Activated CD4-positive, alpha-beta T cell treated with anti-CD3 and anti-CD28 coated beads, Interleukin-2, amount 10 ng/mL, durations not matched to agents 24 days and 14 days (primary cell): ENCODE measurements at regions of chr11 and their contacts with region 1.

Region 1: DNA sequence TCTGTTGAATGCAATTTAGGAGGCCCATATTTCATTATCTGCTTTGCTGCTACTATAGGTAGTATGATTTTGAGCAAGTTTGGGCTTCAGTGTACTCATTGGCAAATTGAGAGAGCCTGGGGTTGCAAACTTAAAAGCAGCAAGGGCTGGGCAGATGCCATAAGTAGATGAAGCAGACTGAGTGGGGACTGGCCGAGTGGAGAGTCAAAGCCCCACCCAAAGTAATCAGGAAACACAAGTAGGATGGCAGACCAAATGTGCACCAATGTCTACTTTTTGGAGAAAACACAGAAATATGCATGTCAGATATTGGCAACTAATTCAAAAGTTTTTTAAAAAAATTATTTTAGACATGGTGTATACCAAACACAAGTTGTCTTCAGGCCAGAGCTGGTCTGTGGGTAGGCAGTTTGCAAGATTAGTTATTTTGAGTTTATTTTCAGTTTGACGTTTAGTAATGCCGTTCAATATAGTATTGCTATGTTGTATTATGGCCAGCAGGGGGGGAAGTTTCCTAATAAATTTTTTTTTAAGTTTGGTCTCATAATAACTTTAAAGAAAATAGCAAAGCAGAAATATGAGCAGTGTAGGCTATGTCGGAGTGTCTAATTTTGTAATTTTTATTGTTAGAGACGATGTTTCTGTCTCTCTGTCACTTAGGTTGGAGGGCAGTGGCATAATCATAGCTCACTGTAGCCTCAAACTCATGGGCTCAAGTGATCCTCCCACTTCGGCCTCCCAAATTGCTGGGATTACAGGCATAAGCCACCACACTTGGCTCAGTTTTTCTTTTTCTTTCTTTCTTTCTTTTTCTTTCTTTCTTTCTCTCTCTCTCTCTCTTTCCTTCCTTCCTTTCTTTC is 105.1 kb downstream of the HIPK3 start:
- DNase-seq: no peak
- H3K4me3 Mint-ChIP-seq: no peak overlapping the region
- H3K27ac Mint-ChIP-seq: no peak overlapping the region
- H3K4me1 Mint-ChIP-seq: no peaks in the 10 kb centered on the region
- H3K27me3 Mint-ChIP-seq: peaks cover 23% of the 10 kb centered on the region

Region 2: GRCh38 chr11:33445761-33446161 is 83.5 kb after region 1 on chr11:
- intact Hi-C with region 1: no loop called
- DNase-seq: no peak
- H3K4me3 Mint-ChIP-seq: no peak overlapping the region
- H3K27ac Mint-ChIP-seq: no peak overlapping the region
- H3K4me1 Mint-ChIP-seq: no peaks in the 10 kb centered on the region
- H3K27me3 Mint-ChIP-seq: no peaks in the 10 kb centered on the region

Region 3: DNA sequence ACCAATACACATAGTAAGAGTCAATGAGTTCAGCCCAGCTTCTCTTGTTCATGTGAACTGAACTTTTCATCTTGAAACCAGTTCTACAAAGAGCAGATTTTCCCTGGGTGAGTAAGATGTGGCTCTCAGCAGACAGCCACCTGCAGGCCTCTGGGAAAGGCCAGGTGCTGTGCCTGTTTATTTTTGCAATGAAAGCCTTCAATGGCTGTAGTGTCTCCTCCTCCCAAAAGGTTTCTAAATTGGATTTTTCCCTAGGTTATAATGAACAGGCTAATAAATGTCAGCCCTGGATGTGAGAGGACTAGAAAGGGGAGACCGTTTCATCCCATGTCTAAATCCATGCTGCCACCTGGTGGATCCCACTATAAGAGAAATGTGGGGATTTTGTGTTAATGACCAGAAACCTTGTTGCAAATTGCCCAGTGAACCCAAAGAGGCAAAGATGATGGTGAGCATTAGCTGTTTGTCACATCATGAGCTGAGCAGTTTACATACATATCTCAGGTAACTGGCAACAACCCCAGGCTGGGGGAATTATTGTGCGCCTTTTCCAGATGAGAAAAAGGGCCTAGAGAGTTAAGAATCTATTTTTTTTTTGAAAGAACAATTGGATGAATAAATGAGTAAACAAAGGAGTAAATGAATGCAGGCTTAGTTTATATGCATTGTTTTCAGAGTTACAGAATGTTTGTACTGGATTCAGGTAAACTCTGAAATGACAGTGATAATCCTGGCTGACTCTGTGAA is 325.6 kb after region 1 on chr11:
- intact Hi-C with region 1: loop called (anchors 1 kb)
- DNase-seq: no peak
- H3K4me3 Mint-ChIP-seq: no peak overlapping the region
- H3K27ac Mint-ChIP-seq: no peak overlapping the region
- H3K4me1 Mint-ChIP-seq: peaks cover 9% of the 10 kb centered on the region
- H3K27me3 Mint-ChIP-seq: peaks cover 9% of the 10 kb centered on the region